ENCODE measurements at regions of chr15 and their contacts with region 1.

Region 1: GRCh38 chr15:90886041-90886614 is 1.8 kb downstream of the FES start:
- DNase-seq: no peak
- H3K4me3 ChIP-seq: no peak overlapping the region
- H3K27me3 ChIP-seq: no peaks in the 10 kb centered on the region
- CTCF ChIP-seq: peak; percentile 99

Region 2: DNA sequence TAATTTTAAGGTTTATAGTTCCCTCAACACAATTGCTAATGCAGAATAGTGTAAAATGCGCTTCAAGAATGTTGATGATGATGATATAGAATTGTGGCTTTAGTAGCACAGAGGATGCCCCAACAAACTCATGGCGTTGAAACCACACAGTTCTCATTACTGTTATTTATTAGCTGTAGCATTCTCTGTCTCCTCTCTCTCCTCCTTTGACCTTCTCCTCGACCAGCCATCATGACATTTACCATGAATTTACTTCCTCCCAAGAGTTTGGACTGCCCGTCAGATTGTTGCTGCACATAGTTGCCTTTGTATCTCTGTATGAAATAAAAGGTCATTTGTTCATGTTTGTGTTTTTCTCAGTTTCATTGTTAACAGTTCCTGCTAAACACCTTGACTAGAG is 384.2 kb before region 1 on chr15:
- CTCF ChIA-PET with region 1: interaction called, 5 read pairs
- POLR2A ChIA-PET with region 1: interaction called, 11 read pairs
- DNase-seq: no peak
- H3K4me3 ChIP-seq: no peak overlapping the region
- H3K27me3 ChIP-seq: no peaks in the 10 kb centered on the region
- CTCF ChIP-seq: no peak

Region 3: DNA sequence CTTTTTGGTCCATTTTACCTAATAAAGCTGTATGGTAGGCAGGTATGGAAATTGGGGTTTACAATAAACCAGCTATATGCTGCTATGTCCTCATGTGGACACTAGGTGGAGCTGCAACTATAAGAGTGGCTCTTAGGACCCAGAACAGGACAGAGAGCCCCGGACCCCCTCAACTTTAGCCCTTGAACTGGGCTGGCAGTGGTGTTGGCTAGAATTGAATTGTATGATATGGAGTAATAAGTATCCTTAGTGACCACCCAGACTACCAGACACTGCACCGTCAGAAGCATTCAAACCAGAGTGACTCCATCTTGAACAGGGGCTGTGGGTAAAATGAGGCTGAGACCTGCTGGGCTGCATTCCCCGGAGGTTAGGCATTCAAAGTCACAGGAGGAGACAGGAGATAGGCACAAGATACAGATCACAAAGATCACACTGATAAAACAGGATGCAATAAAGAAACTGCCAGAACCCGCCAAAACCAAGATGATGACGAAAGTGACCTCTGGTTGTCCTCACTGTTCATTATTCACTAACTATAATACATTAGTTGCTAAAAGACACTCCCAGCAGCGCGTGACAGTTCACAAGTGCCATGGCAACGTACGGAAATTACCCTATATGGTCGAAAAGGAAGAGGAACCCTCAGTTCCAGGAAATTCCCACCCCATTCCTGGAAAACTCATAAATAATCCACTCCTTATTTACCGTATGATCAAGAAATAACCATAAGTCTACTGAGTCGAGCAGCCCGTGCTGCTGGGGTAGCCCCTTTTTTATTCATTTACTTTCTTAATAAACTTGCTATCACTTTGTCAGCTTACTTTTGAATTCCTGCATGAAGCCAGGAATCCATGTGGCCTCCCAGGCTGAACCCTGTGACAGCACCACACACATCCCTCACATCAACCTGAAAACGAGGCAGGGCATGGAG is 237.7 kb before region 1 on chr15:
- CTCF ChIA-PET with region 1: interaction called, 64 read pairs
- POLR2A ChIA-PET with region 1: no interaction called
- DNase-seq: no peak
- H3K4me3 ChIP-seq: no peak overlapping the region
- H3K27me3 ChIP-seq: no peaks in the 10 kb centered on the region
- CTCF ChIP-seq: peak; percentile 88

Region 4: GRCh38 chr15:90701880-90702630 is 184.1 kb before region 1 on chr15:
- CTCF ChIA-PET with region 1: interaction called, 34 read pairs
- POLR2A ChIA-PET with region 1: no interaction called
- DNase-seq: no peak
- H3K4me3 ChIP-seq: no peak overlapping the region
- H3K27me3 ChIP-seq: no peaks in the 10 kb centered on the region
- CTCF ChIP-seq: no peak

Region 5: GRCh38 chr15:90869601-90870353 is 16.4 kb before region 1 on chr15:
- CTCF ChIA-PET with region 1: interaction called, 19 read pairs
- POLR2A ChIA-PET with region 1: no interaction called
- DNase-seq: no peak
- H3K4me3 ChIP-seq: no peak overlapping the region
- H3K27me3 ChIP-seq: no peaks in the 10 kb centered on the region
- CTCF ChIP-seq: no peak

Region 6: DNA sequence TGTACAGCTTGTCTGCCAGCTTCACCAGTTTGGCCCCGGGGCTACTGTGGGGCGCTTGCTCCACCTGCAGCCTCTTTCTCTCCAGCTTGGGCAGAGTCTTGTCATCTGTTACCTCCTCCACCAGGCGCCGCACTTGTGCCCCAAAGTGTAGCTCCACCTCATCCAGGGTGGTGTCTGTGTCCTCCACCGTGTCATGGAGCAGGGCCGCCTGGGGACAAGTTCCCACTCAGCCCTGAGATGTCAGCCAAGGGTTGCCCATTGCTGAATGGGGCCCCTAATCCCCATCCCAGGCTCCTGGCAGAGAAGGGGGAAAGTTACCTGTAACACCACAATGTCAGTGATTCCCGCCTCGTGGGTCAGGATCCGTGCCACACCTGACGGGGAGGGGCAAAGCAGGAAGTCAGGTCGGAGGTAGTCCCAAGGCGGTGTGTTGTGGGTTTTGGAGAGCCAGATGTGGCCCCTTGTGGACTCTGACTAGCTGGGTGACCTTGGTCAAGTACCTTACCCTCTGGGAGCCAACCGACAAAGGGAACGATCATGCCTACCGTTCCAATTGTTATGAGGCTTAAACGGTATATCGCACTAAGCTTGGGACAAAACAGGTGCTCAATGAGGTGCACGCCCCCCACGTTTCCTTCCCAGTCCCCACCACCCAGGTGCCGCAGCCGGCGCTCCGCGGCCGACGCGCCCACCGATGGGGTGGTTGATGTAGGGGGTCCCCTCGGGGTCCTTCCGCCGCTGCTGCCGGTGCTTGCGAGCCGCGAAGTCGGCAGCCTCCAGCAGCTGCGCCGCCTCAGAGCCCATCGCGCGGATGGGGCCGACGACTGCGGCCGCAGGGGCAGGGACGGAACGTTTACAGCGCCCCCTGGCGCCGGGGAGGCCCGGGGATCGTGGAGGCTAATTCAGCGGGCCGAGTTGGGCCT is 45.9 kb after region 1 on chr15 and contains the start of gene HDDC3:
- CTCF ChIA-PET with region 1: interaction called, 32 read pairs
- POLR2A ChIA-PET with region 1: no interaction called
- DNase-seq: no peak
- H3K4me3 ChIP-seq: peak within 1 kb of the TSS; percentile 65
- H3K27me3 ChIP-seq: no peaks in the 10 kb centered on the region
- CTCF ChIP-seq: peak; percentile 94
- polyA plus RNA-seq, gene HDDC3: 12.3 and 12.4 TPM in 2 replicates